Left cardiac atrium (tissue), 4 donors: ENCODE measurements at regions of chr3 and their contacts with region 1.

Region 1: DNA sequence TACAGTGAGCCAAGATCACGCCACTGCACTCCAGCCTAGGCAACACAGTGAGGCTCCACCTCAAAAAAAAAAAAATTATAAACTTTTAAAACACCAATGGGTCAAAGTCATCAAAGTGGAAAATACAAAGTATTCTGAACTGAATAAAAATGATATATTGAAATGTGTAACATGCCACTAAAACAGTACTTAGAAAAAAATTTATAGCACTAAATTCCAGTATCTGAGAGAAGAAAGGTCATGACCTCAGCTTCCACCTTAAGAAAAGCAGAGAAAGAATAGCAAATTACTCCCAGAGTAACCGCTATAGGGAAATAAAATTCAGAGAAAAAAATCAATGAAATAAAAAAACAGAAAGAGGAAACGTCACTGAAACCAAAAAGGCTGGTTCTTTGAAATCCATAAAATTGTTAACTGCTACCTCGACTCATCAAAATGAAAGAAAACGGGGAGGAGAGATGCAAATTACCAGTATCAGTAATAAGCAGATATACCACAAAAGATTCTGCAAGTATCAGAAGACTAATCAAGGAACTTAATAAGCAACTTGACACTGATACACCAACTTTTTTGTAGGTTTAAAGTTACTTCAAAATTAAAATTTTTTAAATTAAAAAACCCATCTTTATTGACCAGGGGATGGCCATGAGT is 20.8 kb downstream of the ATP13A3 start:
- DNase-seq: no peak
- ATAC-seq: no peak

Region 2: GRCh38 chr3:194422188-194422587 is 43.9 kb before region 1 on chr3:
- intact Hi-C with region 1: no loop called
- DNase-seq: no peak
- ATAC-seq: no peak

Region 3: DNA sequence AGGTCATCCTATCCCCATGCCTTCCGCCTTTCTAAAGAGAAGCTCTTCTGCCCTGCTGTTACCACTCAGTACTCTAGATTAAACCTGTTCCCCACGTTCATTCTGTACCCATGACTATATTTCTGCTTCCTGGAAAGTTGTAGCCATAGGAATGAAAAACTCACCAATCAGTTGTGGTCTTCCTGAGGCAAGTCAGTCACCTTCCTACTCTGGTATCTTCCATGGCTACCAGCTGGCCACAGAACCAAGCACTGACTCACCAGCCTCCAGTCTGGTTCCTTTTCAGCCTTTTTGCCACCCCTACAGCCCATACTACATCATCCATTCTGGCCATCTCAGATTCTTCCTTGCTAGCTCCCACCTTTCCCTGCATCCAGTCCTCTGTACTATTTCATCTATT is 120.8 kb after region 1 on chr3:
- intact Hi-C with region 1: loop called in 1 of 2 experiments (anchors 5 kb)
- DNase-seq: no peak
- ATAC-seq: peak in 1 of 2 donors; percentile 16